ENCODE measurements at regions of chr9 and their contacts with region 1.

Region 1: GRCh38 chr9:19412481-19412880 is 3.7 kb downstream of the ACER2 start:
- DNase-seq: no peak
- H3K4me3 ChIP-seq: no peak overlapping the region
- H3K27me3 ChIP-seq: no peaks in the 10 kb centered on the region
- CTCF ChIP-seq: no peak

Region 2: GRCh38 chr9:18863791-18864190 is 548.7 kb before region 1 on chr9:
- CTCF ChIA-PET with region 1: no interaction called
- POLR2A ChIA-PET with region 1: interaction called, 19 read pairs
- DNase-seq: no peak
- H3K4me3 ChIP-seq: no peak overlapping the region
- H3K27me3 ChIP-seq: no peaks in the 10 kb centered on the region
- CTCF ChIP-seq: no peak

Region 3: DNA sequence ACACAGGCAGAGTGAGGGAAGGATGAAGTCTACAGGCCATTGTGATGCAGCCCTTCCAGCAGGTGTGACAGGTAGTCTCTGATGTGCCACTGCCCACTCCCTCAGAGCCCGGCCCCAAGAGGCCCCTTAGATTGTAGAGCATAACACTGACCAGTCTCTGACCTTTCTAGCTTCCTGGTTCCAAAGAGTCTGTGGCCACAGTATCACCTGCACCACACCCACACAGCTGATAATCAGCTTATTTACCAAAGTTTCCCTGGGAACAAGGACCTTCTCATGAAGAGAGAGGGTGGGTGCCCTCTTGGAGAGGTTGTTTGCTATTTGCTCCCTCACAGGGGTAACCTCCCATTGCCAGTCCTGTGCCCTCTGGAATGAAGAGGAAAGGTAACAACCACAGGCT is 14.6 kb before region 1 on chr9:
- CTCF ChIA-PET with region 1: no interaction called
- POLR2A ChIA-PET with region 1: no interaction called
- DNase-seq: no peak
- H3K4me3 ChIP-seq: no peak overlapping the region
- H3K27me3 ChIP-seq: 0 out of 2 replicates have a peak, but pooled peaks cover 1% of the 10 kb centered on the region
- CTCF ChIP-seq: no peak

Region 4: DNA sequence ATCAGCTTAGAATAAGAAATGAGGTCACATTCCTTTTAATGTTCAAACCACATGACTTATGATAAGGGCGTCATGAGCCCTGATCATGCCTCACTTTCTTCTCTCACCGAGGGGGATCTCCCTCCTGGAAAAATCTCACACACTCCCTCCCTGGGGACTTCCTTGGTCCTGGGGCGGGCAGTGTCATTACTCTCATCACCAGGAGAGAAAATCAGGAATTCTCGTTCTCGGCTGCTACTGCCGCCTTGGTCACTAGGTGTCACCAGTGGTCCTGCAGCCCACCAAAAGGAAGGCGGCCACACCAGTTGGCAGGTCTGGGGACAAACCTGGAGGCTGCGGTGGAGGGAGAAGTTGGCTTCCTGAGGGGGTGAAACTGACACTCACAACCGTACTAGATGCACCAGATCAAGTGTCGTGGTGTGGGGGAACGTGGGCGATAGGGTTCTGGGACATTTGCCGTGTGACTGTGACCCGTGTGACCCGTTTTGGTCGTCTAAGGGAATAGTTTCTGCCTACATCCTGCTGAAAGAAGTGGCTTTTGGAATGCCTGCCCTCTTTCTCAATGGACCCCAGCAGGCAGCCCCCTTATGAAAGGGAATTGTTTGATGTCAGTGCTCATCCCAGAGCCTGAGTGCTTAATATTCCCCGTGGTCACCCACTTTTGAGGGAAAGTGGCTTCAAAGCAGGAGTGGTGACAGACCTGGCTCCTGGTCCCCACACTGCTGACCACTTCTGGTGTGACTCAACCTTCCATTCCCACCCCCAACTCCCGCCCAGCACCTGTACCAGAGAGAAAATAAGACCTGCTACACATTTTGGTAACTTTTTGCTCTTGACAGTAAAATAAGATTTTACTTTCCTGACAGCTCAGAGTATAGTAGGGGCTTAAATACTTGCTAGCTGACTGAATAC is 59.5 kb after region 1 on chr9:
- CTCF ChIA-PET with region 1: no interaction called
- POLR2A ChIA-PET with region 1: no interaction called
- DNase-seq: no peak
- H3K4me3 ChIP-seq: no peak overlapping the region
- H3K27me3 ChIP-seq: peaks cover 2% of the 10 kb centered on the region; the same call in 1 of the 2 replicates
- CTCF ChIP-seq: peak; percentile 91

Measured in BJ (cell line).